ENCODE measurements at regions of chr1 and their contacts with region 1.

Region 1: GRCh38 chr1:33086384-33086850 is 5.5 kb downstream of the AZIN2 start:
- DNase-seq: peak; percentile 41 to 81
- H3K4me3 ChIP-seq: no peak overlapping the region
- H3K27ac ChIP-seq: no peak overlapping the region
- H3K4me1 ChIP-seq: peaks cover 0 to 3% (median under 1%) of the 10 kb centered on the region in 4 experiments; a peak in 2 of 7 replicates
- H3K27me3 ChIP-seq: peaks cover 10 to 40% (median 31%) of the 10 kb centered on the region in 4 experiments
- CTCF ChIP-seq: peak; percentile 75 to 93 (median 90)
- EP300 ChIP-seq: no peak
- POLR2A ChIP-seq: no peak
- RAD21 ChIP-seq: peak; percentile 91 to 94

Region 2: DNA sequence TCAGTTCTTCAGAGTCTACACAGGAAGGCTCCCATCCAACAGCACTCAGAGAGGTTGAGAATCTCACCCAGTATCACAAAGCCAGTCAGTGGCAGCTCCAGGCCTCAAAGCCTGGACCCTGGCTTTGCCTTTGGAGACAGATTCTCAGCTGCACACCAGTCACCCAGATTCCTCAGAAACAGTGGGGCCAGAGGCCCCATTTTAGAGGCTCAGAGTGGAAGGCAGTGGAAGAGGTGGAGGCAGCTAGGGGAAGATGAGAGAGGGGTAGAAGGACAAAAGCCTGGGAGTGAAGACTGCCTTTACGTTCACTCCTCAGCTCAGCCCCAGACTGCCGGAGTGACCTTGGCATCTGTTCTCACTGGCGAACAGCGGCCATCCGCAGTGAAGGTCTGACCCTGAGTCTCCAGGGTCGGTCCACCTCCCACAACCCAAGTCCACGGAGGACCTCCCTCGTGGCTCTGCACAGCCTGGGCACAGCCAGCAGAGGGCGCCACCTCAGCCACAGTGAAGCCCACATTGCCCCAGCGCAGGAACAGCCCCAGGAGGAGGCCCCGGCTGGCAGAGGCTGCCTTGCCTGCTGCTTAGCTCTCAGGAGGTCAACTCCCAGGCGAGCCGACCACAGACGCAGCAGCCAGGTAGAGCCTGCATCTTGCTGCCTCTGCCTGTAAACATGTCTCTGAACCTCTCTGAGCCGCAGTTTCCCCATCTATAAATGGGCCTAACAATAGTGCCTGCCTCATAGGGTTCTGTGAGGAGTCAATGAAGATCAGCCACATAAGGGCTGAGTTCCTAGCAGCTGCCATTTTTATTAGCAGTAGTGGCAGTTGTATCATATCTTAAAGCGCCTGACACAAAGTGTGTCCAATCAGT is 209.8 kb before region 1 on chr1:
- CTCF ChIA-PET with region 1: interaction called, 42 read pairs
- POLR2A ChIA-PET with region 1: no interaction called
- DNase-seq: peak in 1 of 2 experiments; percentile 89
- H3K4me3 ChIP-seq: peak overlapping the region in 1 of 4 experiments; percentile 25; a peak in 1 of 8 replicates
- H3K27ac ChIP-seq: no peak overlapping the region
- H3K4me1 ChIP-seq: peaks cover 6 to 30% (median 15%) of the 10 kb centered on the region in 4 experiments
- H3K27me3 ChIP-seq: peaks cover 0 to 7% (median 7%) of the 10 kb centered on the region in 4 experiments; a peak in 6 of 7 replicates
- CTCF ChIP-seq: peak; percentile 93 to 99 (median 99)
- EP300 ChIP-seq: no peak
- POLR2A ChIP-seq: no peak
- RAD21 ChIP-seq: peak; percentile 62 to 75

Region 3: GRCh38 chr1:32900951-32901822 is 185.2 kb before region 1 on chr1 and contains the start of gene TMEM54:
- CTCF ChIA-PET with region 1: interaction called, 17 read pairs
- POLR2A ChIA-PET with region 1: interaction called, 3 read pairs
- DNase-seq: peak in 1 of 2 experiments; percentile 69
- H3K4me3 ChIP-seq: peak within 1 kb of the TSS; percentile 38 to 67 (median 42)
- H3K27ac ChIP-seq: no peak within 1 kb of the TSS
- H3K4me1 ChIP-seq: peaks cover 0 to 11% (median 8%) of the 10 kb centered on the region in 4 experiments; a peak in 6 of 7 replicates
- H3K27me3 ChIP-seq: peaks cover 14 to 40% (median 34%) of the 10 kb centered on the region in 4 experiments
- CTCF ChIP-seq: no peak
- EP300 ChIP-seq: no peak
- POLR2A ChIP-seq: no peak
- RAD21 ChIP-seq: no peak
- total RNA-seq, gene TMEM54: 7.3 and 9.5 TPM in 2 replicates

Measured in H1 (cell line).